ENCODE measurements at regions of chr19 and their contacts with region 1.

Region 1: DNA sequence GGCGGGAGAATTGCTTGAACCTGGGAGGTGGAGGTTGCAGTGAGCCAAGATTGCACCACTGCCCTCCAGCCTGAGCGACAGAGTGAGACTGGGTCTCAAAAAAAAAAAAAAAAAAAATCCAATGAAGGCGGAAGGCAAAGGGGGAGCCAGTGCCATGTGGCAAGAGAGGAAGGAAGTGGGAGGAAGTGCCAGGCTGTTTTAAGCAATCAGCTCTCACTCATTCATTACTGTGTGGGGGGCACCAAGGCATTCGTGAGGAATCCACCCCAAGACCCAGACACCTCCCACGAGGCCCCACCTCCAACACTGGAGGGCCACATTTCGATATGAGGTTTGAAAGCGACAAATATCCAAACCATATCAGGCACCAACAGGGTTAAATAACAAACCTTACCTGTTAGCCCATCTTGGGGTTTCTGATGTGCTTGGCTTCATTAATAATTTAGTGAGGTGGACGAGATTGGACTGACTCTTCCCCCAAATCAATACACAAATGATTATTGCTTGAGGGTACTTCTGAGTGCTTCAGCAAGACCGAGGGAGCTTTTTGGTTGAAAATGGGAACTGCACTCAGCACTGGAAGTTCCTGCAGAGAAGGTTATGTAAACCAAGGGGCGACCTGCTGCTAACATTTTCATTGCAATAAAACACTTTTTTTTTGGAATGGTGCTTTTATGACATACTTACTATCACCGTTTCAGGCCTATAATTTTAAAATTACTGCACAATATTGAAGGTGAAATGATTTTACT is 7.5 kb upstream of the LRP3 start:
- DNase-seq: no peak
- H3K4me3 ChIP-seq: no peak overlapping the region
- H3K4me3 Mint-ChIP-seq: no peak overlapping the region
- H3K27ac ChIP-seq: no peak overlapping the region
- H3K27ac Mint-ChIP-seq: peak overlapping the region in 1 of 8 donors; percentile 83
- H3K4me1 ChIP-seq: peaks cover 5% of the 10 kb centered on the region
- H3K4me1 Mint-ChIP-seq: peaks cover 6 to 11% (median 10%) of the 10 kb centered on the region in 3 donors
- H3K27me3 ChIP-seq: no peaks in the 10 kb centered on the region
- H3K27me3 Mint-ChIP-seq: peaks cover 3 to 9% of the 10 kb centered on the region in 2 donors

Region 2: GRCh38 chr19:31627620-31628361 is 1558.8 kb before region 1 on chr19:
- CTCF ChIA-PET with region 1: no interaction called
- POLR2A ChIA-PET with region 1: no interaction called
- DNase-seq: no peak
- H3K4me3 ChIP-seq: no peak overlapping the region
- H3K4me3 Mint-ChIP-seq: no peak overlapping the region
- H3K27ac ChIP-seq: no peak overlapping the region
- H3K27ac Mint-ChIP-seq: no peak overlapping the region
- H3K4me1 ChIP-seq: no peaks in the 10 kb centered on the region
- H3K4me1 Mint-ChIP-seq: no peaks in the 10 kb centered on the region
- H3K27me3 ChIP-seq: no peaks in the 10 kb centered on the region
- H3K27me3 Mint-ChIP-seq: peaks cover 5 to 11% of the 10 kb centered on the region in 2 donors

Region 3: DNA sequence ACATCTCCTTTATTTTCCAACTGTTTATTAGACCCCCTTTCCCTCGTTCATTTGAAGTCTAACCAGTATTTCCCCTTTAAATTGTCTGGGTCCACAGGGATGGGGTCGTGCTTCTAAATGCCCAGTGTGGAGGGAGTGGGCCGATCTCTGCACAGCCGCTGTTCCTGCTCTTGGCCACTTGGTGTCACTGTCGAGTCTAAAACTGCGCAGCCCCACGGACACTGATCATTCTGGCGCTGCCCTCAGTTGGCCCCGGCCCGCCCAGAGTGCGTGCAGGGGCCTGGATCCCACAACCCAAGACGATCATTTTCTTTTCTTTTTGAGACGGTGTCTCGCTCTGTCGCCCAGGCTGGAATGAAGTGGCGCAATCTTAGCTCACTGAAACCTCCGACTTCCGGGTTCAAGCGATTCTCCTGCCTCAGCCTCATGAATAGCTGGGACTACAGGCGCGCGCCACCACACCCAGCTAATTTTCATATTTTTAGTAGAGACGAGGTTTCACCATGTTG is 42.7 kb before region 1 on chr19:
- CTCF ChIA-PET with region 1: interaction called, 30 read pairs
- POLR2A ChIA-PET with region 1: no interaction called
- DNase-seq: peak; percentile 41 to 72 (median 50)
- H3K4me3 ChIP-seq: no peak overlapping the region
- H3K4me3 Mint-ChIP-seq: peak overlapping the region in 4 of 7 donors; percentile 3 to 52 (median 32)
- H3K27ac ChIP-seq: no peak overlapping the region
- H3K27ac Mint-ChIP-seq: peak overlapping the region in 2 of 8 donors; percentile 16 to 48
- H3K4me1 ChIP-seq: no peaks in the 10 kb centered on the region
- H3K4me1 Mint-ChIP-seq: peaks cover 5 to 6% (median 5%) of the 10 kb centered on the region in 3 donors
- H3K27me3 ChIP-seq: no peaks in the 10 kb centered on the region
- H3K27me3 Mint-ChIP-seq: peaks cover 5 to 16% of the 10 kb centered on the region in 2 donors

Region 4: GRCh38 chr19:33156334-33156733 is 30.3 kb before region 1 on chr19:
- CTCF ChIA-PET with region 1: interaction called, 16 read pairs
- POLR2A ChIA-PET with region 1: no interaction called
- DNase-seq: no peak
- H3K4me3 ChIP-seq: no peak overlapping the region
- H3K4me3 Mint-ChIP-seq: no peak overlapping the region
- H3K27ac ChIP-seq: no peak overlapping the region
- H3K27ac Mint-ChIP-seq: no peak overlapping the region
- H3K4me1 ChIP-seq: peaks cover 28% of the 10 kb centered on the region
- H3K4me1 Mint-ChIP-seq: peaks cover 25 to 36% (median 32%) of the 10 kb centered on the region in 3 donors
- H3K27me3 ChIP-seq: no peaks in the 10 kb centered on the region
- H3K27me3 Mint-ChIP-seq: peaks cover 0 to 1% of the 10 kb centered on the region in 2 donors

Region 5: DNA sequence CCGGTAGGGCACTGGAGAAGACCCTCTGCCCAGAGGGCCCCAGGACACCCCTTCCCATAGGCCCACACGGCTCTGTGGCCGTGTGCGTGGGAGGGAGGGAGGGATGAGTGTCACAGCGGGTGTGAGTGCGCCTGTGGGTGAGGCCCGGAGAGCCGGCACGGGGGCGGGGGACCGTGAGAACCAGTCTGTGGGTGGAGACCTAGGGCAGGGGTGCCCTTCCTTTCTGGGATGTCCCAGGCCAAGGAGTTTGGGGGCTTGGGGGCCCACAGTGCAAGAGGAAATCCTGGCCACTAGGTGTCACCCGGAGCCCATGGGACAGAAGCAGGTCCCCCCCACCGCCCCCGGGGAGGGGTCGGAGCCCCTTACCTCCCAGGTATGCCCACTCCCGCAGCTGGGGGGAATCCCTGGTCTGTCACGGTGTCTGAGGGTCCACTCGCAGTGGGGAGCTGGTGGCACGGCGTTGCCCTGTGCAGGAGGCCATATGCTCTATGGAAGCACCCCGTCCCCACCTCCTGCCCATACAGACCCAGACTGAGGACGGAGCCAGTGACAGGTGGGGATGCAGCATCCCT is 55.0 kb after region 1 on chr19:
- CTCF ChIA-PET with region 1: interaction called, 3 read pairs
- POLR2A ChIA-PET with region 1: interaction called, 10 read pairs
- DNase-seq: peak in 3 of 5 donors; percentile 20 to 35 (median 21)
- H3K4me3 ChIP-seq: no peak overlapping the region
- H3K4me3 Mint-ChIP-seq: peak overlapping the region in 2 of 7 donors; percentile 12 to 18
- H3K27ac ChIP-seq: no peak overlapping the region
- H3K27ac Mint-ChIP-seq: peak overlapping the region in 7 of 8 donors; percentile 39 to 84 (median 74)
- H3K4me1 ChIP-seq: peaks cover 20% of the 10 kb centered on the region
- H3K4me1 Mint-ChIP-seq: peaks cover 10 to 20% (median 13%) of the 10 kb centered on the region in 3 donors
- H3K27me3 ChIP-seq: no peaks in the 10 kb centered on the region
- H3K27me3 Mint-ChIP-seq: peaks cover 5 to 6% of the 10 kb centered on the region in 2 donors